ENCODE measurements at regions of chr5 and their contacts with region 1.

Region 1: GRCh38 chr5:35777358-35778087 is 79.2 kb upstream of the IL7R start:
- DNase-seq: peak; percentile 53
- H3K4me3 Mint-ChIP-seq: no peak overlapping the region
- H3K27ac Mint-ChIP-seq: peak overlapping the region; percentile 30
- H3K4me1 Mint-ChIP-seq: peaks cover 70% of the 10 kb centered on the region
- H3K27me3 Mint-ChIP-seq: no peaks in the 10 kb centered on the region

Region 2: GRCh38 chr5:35212122-35212982 is 565.2 kb before region 1 on chr5:
- intact Hi-C with region 1: no loop called
- DNase-seq: no peak
- H3K4me3 Mint-ChIP-seq: no peak overlapping the region
- H3K27ac Mint-ChIP-seq: no peak overlapping the region
- H3K4me1 Mint-ChIP-seq: no peaks in the 10 kb centered on the region
- H3K27me3 Mint-ChIP-seq: peaks cover 8% of the 10 kb centered on the region

Region 3: GRCh38 chr5:35651002-35651756 is 126.3 kb before region 1 on chr5:
- intact Hi-C with region 1: loop called (anchors 2 kb)
- DNase-seq: peak; percentile 50
- H3K4me3 Mint-ChIP-seq: no peak overlapping the region
- H3K27ac Mint-ChIP-seq: no peak overlapping the region
- H3K4me1 Mint-ChIP-seq: peaks cover 5% of the 10 kb centered on the region
- H3K27me3 Mint-ChIP-seq: no peaks in the 10 kb centered on the region

Region 4: DNA sequence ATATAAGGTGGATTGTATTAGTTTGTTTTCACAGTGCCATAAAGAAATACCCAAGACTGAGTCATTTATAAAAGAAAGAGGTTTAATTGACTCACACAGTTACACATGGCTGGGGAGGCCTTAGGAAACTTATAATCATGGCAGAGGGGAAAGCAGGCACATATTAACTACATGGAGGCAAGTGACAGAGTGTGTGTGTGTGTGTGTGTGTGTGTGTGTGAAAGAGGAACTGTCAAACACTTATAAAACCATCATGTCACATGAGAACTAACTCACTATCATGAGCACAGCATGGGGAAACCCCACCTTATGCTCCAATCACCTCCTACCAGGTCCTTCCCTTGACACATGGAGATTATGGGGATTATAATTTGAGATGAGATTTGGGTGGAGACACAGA is 41.2 kb before region 1 on chr5:
- intact Hi-C with region 1: loop called (anchors 2 kb)
- DNase-seq: no peak
- H3K4me3 Mint-ChIP-seq: no peak overlapping the region
- H3K27ac Mint-ChIP-seq: peak overlapping the region; percentile 69
- H3K4me1 Mint-ChIP-seq: peaks cover 24% of the 10 kb centered on the region
- H3K27me3 Mint-ChIP-seq: no peaks in the 10 kb centered on the region

Region 5: GRCh38 chr5:35811108-35811741 is 33.7 kb after region 1 on chr5:
- intact Hi-C with region 1: loop called (anchors 1 kb)
- DNase-seq: no peak
- H3K4me3 Mint-ChIP-seq: peak overlapping the region; percentile 70
- H3K27ac Mint-ChIP-seq: peak overlapping the region; percentile 98
- H3K4me1 Mint-ChIP-seq: peaks cover 56% of the 10 kb centered on the region
- H3K27me3 Mint-ChIP-seq: no peaks in the 10 kb centered on the region